ENCODE measurements at regions of chr5 and their contacts with region 1.

Region 1: DNA sequence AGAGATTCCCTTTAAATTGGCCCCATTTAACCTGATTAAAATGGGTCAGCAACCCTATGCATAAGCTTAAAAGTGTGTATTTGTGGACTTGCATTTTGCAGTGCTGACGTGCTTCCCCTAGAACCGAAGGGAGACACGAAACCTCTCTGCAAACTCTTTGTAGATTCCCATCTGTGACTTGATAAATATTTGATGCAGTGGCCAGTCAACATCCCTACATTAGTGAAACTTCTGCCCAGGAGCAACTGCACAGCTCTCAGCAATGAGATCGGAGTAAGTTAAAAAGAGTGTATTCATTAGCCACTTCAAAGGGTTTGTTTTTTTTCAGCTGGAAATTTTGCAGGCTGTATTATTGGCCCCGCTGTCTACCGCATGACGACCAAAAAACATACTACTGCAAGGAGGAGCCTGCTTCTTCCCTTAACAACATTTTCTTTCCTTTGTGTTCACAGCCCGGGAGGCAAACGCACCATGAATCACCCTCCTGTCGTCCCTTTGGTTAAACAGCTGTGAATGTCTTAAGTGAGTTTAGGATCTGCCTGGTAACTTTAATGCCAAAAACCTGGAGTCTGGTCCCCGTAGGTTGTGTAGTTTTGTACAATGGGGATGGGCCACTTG is 38.0 kb upstream of the TCERG1 start:
- DNase-seq: peak; percentile 43
- ATAC-seq: peak; percentile 51
- H3K4me3 ChIP-seq: no peak overlapping the region
- H3K27ac ChIP-seq: no peak overlapping the region
- H3K4me1 ChIP-seq: no peaks in the 10 kb centered on the region
- H3K27me3 ChIP-seq: no peaks in the 10 kb centered on the region
- CTCF ChIP-seq: no peak

Region 2: DNA sequence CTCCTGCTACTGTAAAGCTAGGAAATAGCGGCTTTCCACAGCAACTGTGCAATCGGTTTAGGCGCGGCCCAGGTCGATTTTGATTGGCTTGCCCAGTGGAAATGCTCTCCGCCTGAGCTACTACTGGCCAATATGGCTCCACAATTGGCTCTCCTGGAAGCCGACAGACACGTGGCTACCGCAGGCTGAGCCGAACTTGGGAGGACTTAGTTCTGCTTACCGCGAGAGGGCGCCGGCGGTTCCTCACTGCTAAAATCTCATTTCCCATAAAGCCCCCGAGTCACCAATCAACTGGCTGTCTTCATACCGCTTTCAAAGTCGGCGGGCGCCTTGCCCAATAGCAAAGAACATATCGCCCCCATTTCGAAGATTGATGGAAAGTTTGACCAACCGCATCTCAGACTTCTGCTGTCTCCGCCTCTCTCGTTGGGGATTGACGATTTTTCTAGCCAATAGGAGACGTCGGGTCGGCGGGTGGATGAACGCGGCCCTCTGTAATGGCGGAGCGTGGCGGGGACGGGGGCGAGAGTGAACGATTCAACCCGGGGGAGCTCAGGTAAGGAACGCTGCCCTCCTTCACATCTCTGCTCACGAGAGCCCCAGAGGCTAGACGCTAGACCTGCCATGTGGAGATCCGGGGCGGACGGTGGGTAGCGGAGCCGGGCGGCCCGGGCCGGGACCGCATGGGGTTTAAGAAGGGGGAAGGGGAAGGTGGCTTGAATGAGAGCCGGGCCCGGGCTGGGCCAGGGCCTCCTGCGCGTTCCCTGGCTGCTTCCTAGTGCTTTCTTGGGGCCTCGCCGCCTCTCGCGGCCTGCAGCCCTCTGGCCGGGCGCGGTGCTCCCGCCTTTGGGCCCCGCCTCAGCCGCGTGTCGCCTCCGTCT is 37.9 kb after region 1 on chr5 and contains the start of gene TCERG1:
- CTCF ChIA-PET with region 1: no interaction called
- POLR2A ChIA-PET with region 1: no interaction called
- intact Hi-C with region 1: no loop called
- DNase-seq: peak; percentile 100
- ATAC-seq: peak; percentile 91
- H3K4me3 ChIP-seq: peak within 1 kb of the TSS; percentile 77
- H3K27ac ChIP-seq: peak within 1 kb of the TSS; percentile 77
- H3K4me1 ChIP-seq: peaks cover 33% of the 10 kb centered on the region
- H3K27me3 ChIP-seq: no peaks in the 10 kb centered on the region
- CTCF ChIP-seq: peak; percentile 93
- total RNA-seq, gene TCERG1: 86.0 and 96.9 TPM in 2 replicates

Region 3: GRCh38 chr5:146516151-146516475 is 107.0 kb after region 1 on chr5 and contains the start of gene GPR151:
- CTCF ChIA-PET with region 1: interaction called, 16 read pairs
- POLR2A ChIA-PET with region 1: no interaction called
- intact Hi-C with region 1: no loop called
- DNase-seq: no peak
- ATAC-seq: peak; percentile 25; the same call in 1 of the 2 replicates
- H3K4me3 ChIP-seq: no peak within 1 kb of the TSS
- H3K27ac ChIP-seq: no peak within 1 kb of the TSS
- H3K4me1 ChIP-seq: peaks cover 3% of the 10 kb centered on the region; the same call in 1 of the 2 replicates
- H3K27me3 ChIP-seq: no peaks in the 10 kb centered on the region
- CTCF ChIP-seq: no peak
- total RNA-seq, gene GPR151: not detected in 2 replicates